Activated CD4-positive, alpha-beta memory T cell treated with anti-CD3 and anti-CD28 coated beads for 36 hours (primary cell): ENCODE measurements at regions of chr7 and their contacts with region 1.

Region 1: GRCh38 chr7:97835296-97836138 is 36.7 kb downstream of the ASNS start:
- DNase-seq: peak; percentile 70
- H3K4me3 Mint-ChIP-seq: no peak overlapping the region
- H3K27ac Mint-ChIP-seq: no peak overlapping the region
- H3K4me1 Mint-ChIP-seq: peaks cover 2% of the 10 kb centered on the region
- H3K27me3 Mint-ChIP-seq: peaks cover 25% of the 10 kb centered on the region

Region 2: GRCh38 chr7:95916573-95917297 is 1918.8 kb before region 1 on chr7:
- CTCF ChIA-PET with region 1: interaction called, 6 read pairs
- POLR2A ChIA-PET with region 1: no interaction called
- intact Hi-C with region 1: loop called (anchors 2 kb)
- DNase-seq: peak; percentile 82
- H3K4me3 Mint-ChIP-seq: no peak overlapping the region
- H3K27ac Mint-ChIP-seq: no peak overlapping the region
- H3K4me1 Mint-ChIP-seq: peaks cover 2% of the 10 kb centered on the region
- H3K27me3 Mint-ChIP-seq: peaks cover 18% of the 10 kb centered on the region

Region 3: GRCh38 chr7:97104719-97105238 is 730.7 kb before region 1 on chr7:
- CTCF ChIA-PET with region 1: interaction called, 15 read pairs
- POLR2A ChIA-PET with region 1: no interaction called
- intact Hi-C with region 1: loop called (anchors 2 kb)
- DNase-seq: peak; percentile 80
- H3K4me3 Mint-ChIP-seq: no peak overlapping the region
- H3K27ac Mint-ChIP-seq: no peak overlapping the region
- H3K4me1 Mint-ChIP-seq: no peaks in the 10 kb centered on the region
- H3K27me3 Mint-ChIP-seq: peaks cover 12% of the 10 kb centered on the region

Region 4: DNA sequence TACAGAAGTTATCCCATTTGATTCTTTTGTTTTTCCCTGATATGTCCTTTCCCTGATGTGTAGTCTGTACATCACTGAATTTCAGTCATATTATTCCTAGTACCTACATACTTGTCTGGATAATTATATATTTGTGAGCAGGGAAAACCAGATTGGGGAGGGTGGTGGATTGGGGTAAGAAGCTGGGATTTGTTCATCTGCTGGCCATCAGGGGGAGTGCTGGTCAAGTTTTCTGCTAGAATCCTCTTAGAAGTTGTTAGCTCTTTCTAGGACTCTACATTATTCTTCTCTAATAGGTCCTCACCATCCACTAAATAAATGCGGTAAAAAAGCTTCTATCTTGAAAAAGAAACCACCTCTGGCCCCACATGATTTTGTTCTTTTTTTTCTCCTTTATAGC is 336.3 kb before region 1 on chr7:
- CTCF ChIA-PET with region 1: interaction called, 5 read pairs
- POLR2A ChIA-PET with region 1: no interaction called
- intact Hi-C with region 1: loop called (anchors 2 kb)
- DNase-seq: peak; percentile 14
- H3K4me3 Mint-ChIP-seq: no peak overlapping the region
- H3K27ac Mint-ChIP-seq: no peak overlapping the region
- H3K4me1 Mint-ChIP-seq: no peaks in the 10 kb centered on the region
- H3K27me3 Mint-ChIP-seq: no peaks in the 10 kb centered on the region

Region 5: GRCh38 chr7:97770850-97771249 is 64.7 kb before region 1 on chr7:
- CTCF ChIA-PET with region 1: no interaction called
- POLR2A ChIA-PET with region 1: no interaction called
- intact Hi-C with region 1: no loop called
- DNase-seq: no peak
- H3K4me3 Mint-ChIP-seq: no peak overlapping the region
- H3K27ac Mint-ChIP-seq: no peak overlapping the region
- H3K4me1 Mint-ChIP-seq: no peaks in the 10 kb centered on the region
- H3K27me3 Mint-ChIP-seq: peaks cover 2% of the 10 kb centered on the region

Region 6: GRCh38 chr7:97819161-97819560 is 16.4 kb before region 1 on chr7:
- CTCF ChIA-PET with region 1: interaction called, 16 read pairs
- POLR2A ChIA-PET with region 1: no interaction called
- intact Hi-C with region 1: no loop called
- DNase-seq: no peak
- H3K4me3 Mint-ChIP-seq: no peak overlapping the region
- H3K27ac Mint-ChIP-seq: no peak overlapping the region
- H3K4me1 Mint-ChIP-seq: no peaks in the 10 kb centered on the region
- H3K27me3 Mint-ChIP-seq: no peaks in the 10 kb centered on the region

Region 7: DNA sequence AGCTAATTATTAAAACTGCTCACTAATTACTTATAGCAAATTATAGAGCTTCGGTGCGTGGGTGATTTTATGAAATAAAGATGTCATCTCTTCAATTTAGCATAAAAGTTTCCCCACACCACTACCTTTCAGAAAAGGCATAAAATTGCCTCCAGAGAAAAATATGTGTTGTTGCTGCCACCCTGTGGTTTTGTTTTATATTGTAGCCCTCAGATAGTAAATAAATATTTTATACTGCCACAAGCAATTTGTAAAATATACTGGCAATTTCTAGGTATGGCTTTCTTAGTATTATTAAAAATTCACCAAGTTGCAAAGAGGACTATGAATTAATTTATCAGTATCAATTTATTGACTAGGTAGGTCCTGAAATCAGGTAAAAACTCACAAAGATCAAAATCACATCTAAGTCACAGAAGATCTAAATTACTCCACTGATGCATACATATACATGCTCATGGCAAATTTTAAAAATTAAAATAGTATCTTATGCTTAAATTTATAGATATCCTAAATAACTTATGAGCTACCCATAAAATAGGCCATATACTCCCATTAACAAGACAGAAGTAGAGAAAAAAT is 10.2 kb after region 1 on chr7:
- CTCF ChIA-PET with region 1: interaction called, 38 read pairs
- POLR2A ChIA-PET with region 1: no interaction called
- intact Hi-C with region 1: no loop called
- DNase-seq: no peak
- H3K4me3 Mint-ChIP-seq: no peak overlapping the region
- H3K27ac Mint-ChIP-seq: no peak overlapping the region
- H3K4me1 Mint-ChIP-seq: no peaks in the 10 kb centered on the region
- H3K27me3 Mint-ChIP-seq: peaks cover 4% of the 10 kb centered on the region